Breast epithelium (tissue), 4 donors: ENCODE measurements at regions of chr15 and their contacts with region 1.

Region 1: GRCh38 chr15:90565866-90566265 is 36.1 kb downstream of the CRTC3 start:
- DNase-seq: no peak
- H3K4me3 ChIP-seq: no peak overlapping the region
- H3K27ac ChIP-seq: no peak overlapping the region
- H3K4me1 ChIP-seq: peaks cover 3 to 4% of the 10 kb centered on the region in 2 donors
- H3K27me3 ChIP-seq: no peaks in the 10 kb centered on the region
- CTCF ChIP-seq: no peak
- POLR2A ChIP-seq: no peak

Region 2: DNA sequence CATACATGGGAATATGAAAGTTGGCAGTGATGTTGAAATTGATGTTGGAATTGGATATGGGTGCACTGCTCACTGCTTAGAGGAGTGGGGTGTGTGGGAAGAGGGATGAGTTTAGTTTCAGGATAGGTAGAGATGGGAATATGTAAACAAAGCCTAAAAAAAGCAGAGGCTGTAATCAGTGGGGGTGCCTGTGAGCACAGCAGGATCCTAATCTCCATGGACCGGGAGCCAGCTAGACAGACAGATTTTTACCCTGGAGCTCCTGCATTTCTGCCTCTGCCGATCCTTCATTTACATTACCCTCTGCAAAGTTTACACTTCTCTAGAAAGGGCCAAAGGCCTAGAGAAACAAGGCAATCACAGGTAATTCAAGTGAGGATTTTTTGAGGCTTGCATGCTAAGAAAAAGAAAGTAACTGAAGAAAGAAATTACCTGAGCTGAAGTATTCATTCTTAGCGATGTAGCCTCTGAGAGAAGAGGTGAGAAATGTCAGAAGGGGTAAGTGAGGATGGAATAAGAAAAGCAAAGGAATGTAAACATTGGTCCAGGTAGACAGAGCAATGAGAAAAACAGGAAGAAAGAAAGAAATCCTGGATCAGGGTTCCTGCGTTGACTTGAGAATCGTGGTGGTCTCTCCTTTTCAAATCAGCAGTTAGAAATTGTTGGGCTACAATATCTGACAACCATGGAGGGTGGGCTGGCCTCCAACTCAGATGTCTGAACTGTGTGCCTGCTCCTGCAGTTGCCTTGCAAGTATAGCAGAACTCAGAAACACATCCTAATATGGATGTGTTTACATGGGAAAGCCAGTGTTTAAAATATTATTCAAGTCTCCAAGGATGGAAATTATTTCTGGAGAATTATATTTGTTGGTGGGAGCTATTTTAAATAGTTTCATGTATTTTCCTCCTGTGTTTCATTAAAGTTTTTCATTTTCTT is 43.6 kb after region 1 on chr15:
- intact Hi-C with region 1: loop called (anchors 1 kb)
- DNase-seq: no peak
- H3K4me3 ChIP-seq: no peak overlapping the region
- H3K27ac ChIP-seq: peak overlapping the region in 1 of 2 donors; percentile 1
- H3K4me1 ChIP-seq: no peaks in the 10 kb centered on the region
- H3K27me3 ChIP-seq: no peaks in the 10 kb centered on the region
- CTCF ChIP-seq: no peak
- POLR2A ChIP-seq: no peak

Region 3: GRCh38 chr15:90716976-90717821 is 151.3 kb after region 1 on chr15 and contains the start of gene BLM:
- intact Hi-C with region 1: no loop called
- DNase-seq: peak; percentile 94 to 96
- H3K4me3 ChIP-seq: peak within 1 kb of the TSS; percentile 53 to 80 (median 71)
- H3K27ac ChIP-seq: peak within 1 kb of the TSS; percentile 82 to 96
- H3K4me1 ChIP-seq: peaks cover 0 to 9% of the 10 kb centered on the region in 2 donors
- H3K27me3 ChIP-seq: no peaks in the 10 kb centered on the region
- CTCF ChIP-seq: peak; percentile 56 to 64 (median 62)
- POLR2A ChIP-seq: peak; percentile 24
- total RNA-seq, gene BLM: 0.33 to 7.4 (median 2.2) TPM